Ascending aorta (tissue), 2 donors: ENCODE measurements at regions of chr17 and their contacts with region 1.

Region 1: DNA sequence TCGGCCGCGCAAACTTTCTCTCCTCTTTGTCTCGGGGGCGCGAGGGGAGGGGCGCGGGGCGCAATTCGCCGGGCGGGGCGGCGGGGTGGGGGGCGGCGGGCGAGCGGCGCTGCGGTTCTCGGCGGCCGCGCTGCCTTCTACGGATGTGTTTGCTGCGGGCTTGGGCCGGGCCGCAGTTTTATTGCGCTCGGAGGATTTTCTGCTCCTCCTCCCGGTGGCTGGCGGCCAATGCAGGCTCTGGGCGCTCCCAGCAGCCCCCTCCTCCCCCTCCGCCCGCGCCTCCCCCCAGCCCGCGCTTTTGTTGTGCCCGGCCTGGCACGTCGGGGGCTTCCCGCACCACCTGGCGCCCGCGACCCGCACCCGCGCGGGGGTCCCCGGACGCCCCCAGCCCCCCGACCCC is at the start of gene TIMP2:
- DNase-seq: peak; percentile 43 to 90
- H3K4me3 ChIP-seq: peak within 1 kb of the TSS; percentile 94 to 98
- H3K27ac ChIP-seq: peak within 1 kb of the TSS; percentile 92 to 96
- H3K4me1 ChIP-seq: peaks cover 25 to 55% of the 10 kb centered on the region in 2 donors
- H3K27me3 ChIP-seq: no peaks in the 10 kb centered on the region
- CTCF ChIP-seq: peak in 1 of 3 experiments; percentile 8
- total RNA-seq, gene TIMP2: 278 TPM

Region 2: GRCh38 chr17:78865682-78866390 is 59.4 kb before region 1 on chr17:
- intact Hi-C with region 1: loop called (anchors 2 kb)
- DNase-seq: peak in 1 of 2 donors; percentile 90
- H3K4me3 ChIP-seq: no peak overlapping the region
- H3K27ac ChIP-seq: peak overlapping the region; percentile 31 to 50
- H3K4me1 ChIP-seq: peaks cover 5 to 39% of the 10 kb centered on the region in 2 donors
- H3K27me3 ChIP-seq: no peaks in the 10 kb centered on the region
- CTCF ChIP-seq: peak; percentile 89 to 96 (median 94)

Region 3: GRCh38 chr17:78883164-78884122 is 41.8 kb before region 1 on chr17:
- intact Hi-C with region 1: loop called (anchors 2 kb)
- DNase-seq: peak; percentile 77 to 94
- H3K4me3 ChIP-seq: peak overlapping the region; percentile 33 to 59
- H3K27ac ChIP-seq: peak overlapping the region; percentile 90 to 97
- H3K4me1 ChIP-seq: peaks cover 24 to 58% of the 10 kb centered on the region in 2 donors
- H3K27me3 ChIP-seq: no peaks in the 10 kb centered on the region
- CTCF ChIP-seq: peak in 1 of 3 experiments; percentile 9

Region 4: DNA sequence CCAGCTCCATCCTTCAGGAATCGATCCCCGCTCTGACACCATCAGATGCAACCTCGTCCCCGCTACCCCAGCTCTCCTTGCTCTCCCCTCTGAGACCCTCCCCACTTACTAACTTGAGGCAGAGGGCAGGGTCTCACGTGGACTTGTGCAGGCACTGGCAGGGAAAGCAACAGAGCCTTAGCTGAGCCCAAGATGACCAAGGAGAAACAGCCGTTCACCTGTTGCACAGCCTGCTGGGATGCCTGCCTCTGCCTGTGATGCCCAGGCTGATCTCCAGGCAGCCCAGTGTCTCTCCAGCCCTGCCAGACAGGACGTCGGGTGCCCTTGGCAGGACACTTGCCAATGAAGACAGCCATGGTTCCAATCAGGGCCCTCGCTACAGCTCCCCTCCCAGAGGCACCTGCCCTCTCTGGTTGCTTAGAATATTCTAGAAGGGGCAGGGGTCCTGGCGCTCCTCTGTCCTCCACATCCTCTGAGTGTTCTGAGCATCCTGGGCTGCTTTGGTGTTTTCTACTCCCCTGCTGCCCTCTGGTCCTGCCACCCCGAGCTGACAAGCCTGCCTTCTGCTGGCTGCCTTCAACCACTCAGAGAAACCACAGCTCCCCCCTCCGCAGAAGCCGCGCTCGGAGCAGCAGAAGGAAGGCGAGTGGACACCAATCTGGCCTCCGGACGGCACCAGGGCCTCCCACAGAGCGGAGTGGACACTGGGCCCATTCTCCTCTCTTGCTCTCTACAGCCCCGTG is 29.0 kb before region 1 on chr17:
- intact Hi-C with region 1: loop called (anchors 2 kb)
- DNase-seq: no peak
- H3K4me3 ChIP-seq: peak overlapping the region in 1 of 2 donors; percentile 18
- H3K27ac ChIP-seq: peak overlapping the region; percentile 56 to 62
- H3K4me1 ChIP-seq: peaks cover 19 to 64% of the 10 kb centered on the region in 2 donors
- H3K27me3 ChIP-seq: no peaks in the 10 kb centered on the region
- CTCF ChIP-seq: peak in 1 of 3 experiments; percentile 12

Region 5: DNA sequence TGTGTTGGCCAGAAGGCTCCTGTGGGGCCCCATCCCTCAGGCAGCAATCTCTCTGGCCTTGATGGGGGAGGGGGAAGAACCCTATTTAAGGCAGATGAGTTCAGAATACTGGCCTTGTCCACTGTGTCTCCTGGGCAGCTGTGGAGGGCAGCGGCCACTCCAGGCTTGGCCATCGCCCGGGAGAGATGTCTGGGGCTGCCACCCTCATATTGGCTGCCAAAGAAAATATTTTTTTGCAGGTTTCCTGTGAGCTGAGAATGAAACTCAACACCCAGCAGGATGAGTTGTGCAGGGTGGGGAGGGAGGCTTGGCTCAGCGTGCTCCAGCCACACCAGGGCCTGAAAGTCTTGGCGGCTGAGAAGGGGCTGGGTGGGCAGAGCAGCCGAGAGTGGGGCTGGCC is 14.4 kb after region 1 on chr17:
- intact Hi-C with region 1: loop called (anchors 1 kb)
- DNase-seq: no peak
- H3K4me3 ChIP-seq: no peak overlapping the region
- H3K27ac ChIP-seq: peak overlapping the region; percentile 28 to 33
- H3K4me1 ChIP-seq: peaks cover 15 to 30% of the 10 kb centered on the region in 2 donors
- H3K27me3 ChIP-seq: no peaks in the 10 kb centered on the region
- CTCF ChIP-seq: no peak

Region 6: GRCh38 chr17:78970834-78971773 is 45.9 kb after region 1 on chr17:
- intact Hi-C with region 1: loop called (anchors 2 kb)
- DNase-seq: peak; percentile 28 to 90
- H3K4me3 ChIP-seq: peak overlapping the region in 1 of 2 donors; percentile 10
- H3K27ac ChIP-seq: peak overlapping the region in 1 of 2 donors; percentile 58
- H3K4me1 ChIP-seq: peaks cover 7 to 8% of the 10 kb centered on the region in 2 donors
- H3K27me3 ChIP-seq: no peaks in the 10 kb centered on the region
- CTCF ChIP-seq: peak; percentile 86 to 93 (median 92)